ENCODE measurements at regions of chr2 and their contacts with region 1.

Region 1: GRCh38 chr2:222613715-222614331 is 42.1 kb downstream of the FARSB start:
- DNase-seq: no peak
- ATAC-seq: peak in 1 of 4 donors; percentile 62
- H3K4me3 ChIP-seq: no peak overlapping the region
- H3K27ac ChIP-seq: no peak overlapping the region
- H3K4me1 ChIP-seq: no peaks in the 10 kb centered on the region
- H3K27me3 ChIP-seq: no peaks in the 10 kb centered on the region
- CTCF ChIP-seq: peak; percentile 57 to 79 (median 70)
- POLR2A ChIP-seq: no peak

Region 2: GRCh38 chr2:222057347-222058073 is 556.3 kb before region 1 on chr2:
- intact Hi-C with region 1: loop called in 9 of 10 experiments (anchors 1 to 10 kb)
- DNase-seq: no peak
- ATAC-seq: peak in 2 of 4 donors; percentile 62 to 69
- H3K4me3 ChIP-seq: no peak overlapping the region
- H3K27ac ChIP-seq: no peak overlapping the region
- H3K4me1 ChIP-seq: peaks cover 0 to 10% (median 0%) of the 10 kb centered on the region in 12 donors
- H3K27me3 ChIP-seq: peaks cover 0 to 61% (median 11%) of the 10 kb centered on the region in 9 donors
- CTCF ChIP-seq: peak; percentile 45 to 77 (median 60)
- POLR2A ChIP-seq: no peak

Region 3: GRCh38 chr2:222064286-222064685 is 549.5 kb before region 1 on chr2:
- intact Hi-C with region 1: loop called in 7 of 10 experiments (anchors 5 to 10 kb)
- DNase-seq: no peak
- ATAC-seq: no peak
- H3K4me3 ChIP-seq: no peak overlapping the region
- H3K27ac ChIP-seq: no peak overlapping the region
- H3K4me1 ChIP-seq: no peaks in the 10 kb centered on the region
- H3K27me3 ChIP-seq: peaks cover 0 to 21% (median 0%) of the 10 kb centered on the region in 9 donors
- CTCF ChIP-seq: no peak
- POLR2A ChIP-seq: no peak

Region 4: DNA sequence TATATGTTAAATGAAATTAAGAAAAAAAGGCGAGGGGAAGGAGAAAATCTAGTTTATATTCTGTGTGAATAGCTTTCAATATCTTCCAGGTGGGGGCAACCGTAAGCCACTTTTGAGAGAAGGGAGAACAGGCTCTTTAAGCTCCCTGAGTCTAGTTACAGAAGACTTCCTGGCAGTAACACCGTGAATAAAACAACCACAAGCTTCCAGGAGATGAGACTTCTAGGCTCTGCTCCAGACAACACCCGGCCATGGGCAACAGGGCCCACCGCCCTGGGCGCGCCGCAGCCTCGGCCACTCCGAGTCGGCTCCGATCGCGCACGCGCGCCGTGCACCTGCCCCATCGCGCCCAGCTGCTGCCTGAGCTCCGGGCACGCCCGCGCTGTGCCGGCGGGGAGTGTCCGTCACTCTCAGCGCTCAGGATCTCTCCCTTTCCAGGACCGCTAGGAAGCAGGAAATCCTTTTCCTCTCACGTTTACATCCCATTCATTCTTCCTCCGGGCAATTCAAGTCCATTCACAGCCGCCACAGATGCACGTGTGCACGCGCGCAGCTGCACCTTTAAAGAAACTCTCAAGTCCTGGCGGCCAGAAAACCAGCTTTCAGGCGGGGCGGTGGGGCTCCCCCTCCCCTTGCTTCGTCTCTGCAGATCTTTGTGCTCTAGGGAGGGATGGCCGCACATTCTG is 295.7 kb before region 1 on chr2:
- intact Hi-C with region 1: loop called (anchors 1 to 5 kb)
- DNase-seq: peak in 3 of 5 donors; percentile 49 to 75 (median 75)
- ATAC-seq: peak; percentile 43 to 85 (median 79)
- H3K4me3 ChIP-seq: peak overlapping the region; percentile 13 to 68 (median 50)
- H3K27ac ChIP-seq: peak overlapping the region in 2 of 12 donors; percentile 17 to 29
- H3K4me1 ChIP-seq: peaks cover 0 to 21% (median 8%) of the 10 kb centered on the region in 12 donors
- H3K27me3 ChIP-seq: peaks cover 3 to 79% (median 23%) of the 10 kb centered on the region in 9 donors
- CTCF ChIP-seq: peak in 11 of 12 donors; percentile 18 to 68 (median 54)
- POLR2A ChIP-seq: no peak

Region 5: GRCh38 chr2:222424729-222425671 is 188.8 kb before region 1 on chr2:
- intact Hi-C with region 1: no loop called
- DNase-seq: peak in 2 of 5 donors; percentile 61 to 63
- ATAC-seq: peak; percentile 50 to 70 (median 56)
- H3K4me3 ChIP-seq: peak overlapping the region; percentile 43 to 72 (median 60)
- H3K27ac ChIP-seq: peak overlapping the region in 6 of 12 donors; percentile 7 to 55 (median 18)
- H3K4me1 ChIP-seq: peaks cover 0 to 17% (median 0%) of the 10 kb centered on the region in 12 donors
- H3K27me3 ChIP-seq: peaks cover 0 to 42% (median 10%) of the 10 kb centered on the region in 9 donors
- CTCF ChIP-seq: no peak
- POLR2A ChIP-seq: no peak

Region 6: GRCh38 chr2:222572751-222573174 is 41.1 kb before region 1 on chr2:
- intact Hi-C with region 1: loop called in 1 of 10 experiments (anchors 5 kb)
- DNase-seq: peak in 1 of 5 donors; percentile 32
- ATAC-seq: peak; percentile 75 to 88 (median 82)
- H3K4me3 ChIP-seq: no peak overlapping the region
- H3K27ac ChIP-seq: peak overlapping the region in 11 of 12 donors; percentile 20 to 69 (median 55)
- H3K4me1 ChIP-seq: peaks cover 0 to 26% (median 14%) of the 10 kb centered on the region in 12 donors
- H3K27me3 ChIP-seq: no peaks in the 10 kb centered on the region
- CTCF ChIP-seq: no peak
- POLR2A ChIP-seq: no peak

Measured in heart left ventricle (tissue), 16 donors.